GM12878 (cell line): ENCODE measurements at regions of chr6 and their contacts with region 1.

Region 1: DNA sequence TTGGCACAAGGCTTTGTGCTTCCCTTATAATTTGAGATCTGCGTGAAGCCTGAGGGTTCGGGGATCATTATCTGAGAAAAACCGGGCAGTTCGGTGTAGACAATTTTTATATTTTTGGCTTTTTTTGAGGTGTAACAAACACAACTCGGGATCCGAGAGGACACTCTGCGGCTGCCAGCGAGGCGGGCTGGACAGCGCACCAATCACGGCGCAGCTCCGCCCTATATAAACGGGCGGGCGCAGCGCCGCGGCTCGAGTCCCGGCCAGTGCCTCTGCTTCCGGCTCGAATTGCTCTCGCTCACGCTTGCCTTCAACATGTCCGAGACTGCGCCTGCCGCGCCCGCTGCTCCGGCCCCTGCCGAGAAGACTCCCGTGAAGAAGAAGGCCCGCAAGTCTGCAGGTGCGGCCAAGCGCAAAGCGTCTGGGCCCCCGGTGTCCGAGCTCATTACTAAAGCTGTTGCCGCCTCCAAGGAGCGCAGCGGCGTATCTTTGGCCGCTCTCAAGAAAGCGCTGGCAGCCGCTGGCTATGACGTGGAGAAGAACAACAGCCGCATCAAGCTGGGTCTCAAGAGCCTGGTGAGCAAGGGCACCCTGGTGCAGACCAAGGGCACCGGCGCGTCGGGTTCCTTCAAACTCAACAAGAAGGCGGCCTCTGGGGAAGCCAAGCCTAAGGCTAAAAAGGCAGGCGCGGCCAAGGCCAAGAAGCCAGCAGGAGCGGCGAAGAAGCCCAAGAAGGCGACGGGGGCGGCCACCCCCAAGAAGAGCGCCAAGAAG is 69.0 kb downstream of the HFE start:
- DNase-seq: peak; percentile 90
- ATAC-seq: peak; percentile 65
- H3K4me3 ChIP-seq: peak overlapping the region; percentile 88
- H3K27ac ChIP-seq: peak overlapping the region; percentile 94
- H3K4me1 ChIP-seq: peaks cover 11% of the 10 kb centered on the region
- H3K27me3 ChIP-seq: no peaks in the 10 kb centered on the region
- CTCF ChIP-seq: no peak
- EP300 ChIP-seq: no peak; a peak in 1 of 4 replicates
- POLR2A ChIP-seq: peak; percentile 93
- RAD21 ChIP-seq: no peak

Region 2: DNA sequence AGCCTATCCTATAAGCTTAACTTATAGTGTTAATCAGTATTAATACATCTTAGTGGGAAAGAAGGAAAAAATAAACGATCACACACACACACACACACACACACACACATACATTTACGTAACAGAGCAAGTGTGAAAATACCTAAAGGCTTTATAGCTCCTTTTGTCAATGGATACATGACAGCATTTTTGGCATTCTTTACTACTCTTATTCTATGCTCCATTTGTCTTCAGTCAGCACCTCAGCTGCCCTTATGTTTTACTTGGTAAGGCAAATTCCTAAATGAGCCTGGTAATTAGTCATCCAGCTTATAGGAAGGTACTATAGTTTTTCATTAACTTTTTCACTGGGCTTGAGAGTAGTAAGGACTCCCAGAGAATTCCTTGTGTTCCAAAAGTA is 257.1 kb before region 1 on chr6:
- CTCF ChIA-PET with region 1: no interaction called
- POLR2A ChIA-PET with region 1: no interaction called
- RAD21 ChIA-PET with region 1: no interaction called
- SMC1A ChIA-PET with region 1: no interaction called
- in situ Hi-C with region 1: no loop called
- intact Hi-C with region 1: no loop called
- DNase-seq: no peak
- ATAC-seq: no peak
- H3K4me3 ChIP-seq: no peak overlapping the region
- H3K27ac ChIP-seq: no peak overlapping the region
- H3K4me1 ChIP-seq: no peaks in the 10 kb centered on the region
- H3K27me3 ChIP-seq: no peaks in the 10 kb centered on the region
- CTCF ChIP-seq: no peak
- EP300 ChIP-seq: no peak
- POLR2A ChIP-seq: no peak
- RAD21 ChIP-seq: no peak

Region 3: DNA sequence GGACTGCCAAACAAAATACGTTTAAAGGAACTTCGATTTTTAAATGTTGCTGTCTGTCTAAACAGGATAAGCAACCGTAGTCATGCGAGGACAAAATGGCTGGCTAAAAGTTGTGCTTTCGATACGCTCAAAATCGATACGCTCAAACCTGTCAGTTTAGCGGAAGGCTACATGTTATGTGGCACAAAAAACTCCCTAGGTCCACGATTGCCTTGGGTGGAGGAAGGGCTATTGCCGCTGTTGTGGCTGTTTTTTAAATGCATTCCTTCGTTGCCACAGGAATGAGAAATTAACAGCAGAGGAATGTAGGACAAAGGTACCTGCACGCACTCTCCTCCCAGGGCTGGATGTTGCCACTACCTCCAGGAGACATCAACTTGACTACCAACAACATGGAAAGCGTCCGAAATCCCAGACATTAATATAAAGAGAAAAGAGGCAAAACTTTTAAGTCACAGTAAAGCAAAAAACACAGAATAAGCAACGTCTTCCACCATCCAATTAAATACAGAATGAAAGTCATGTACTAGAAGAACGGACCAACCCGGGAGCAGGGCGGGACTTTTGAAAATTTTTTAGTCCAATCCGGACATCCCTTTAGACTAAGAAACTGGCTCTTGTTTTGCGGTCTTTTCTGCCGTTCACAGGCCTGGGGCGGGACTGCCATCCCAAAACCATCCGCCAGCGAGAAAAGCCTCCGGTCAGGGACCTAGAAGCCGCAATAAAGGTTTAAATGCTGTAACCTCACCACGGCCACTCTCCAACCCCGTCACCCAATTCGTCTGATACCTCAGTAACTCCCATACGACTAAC is 101.2 kb before region 1 on chr6:
- CTCF ChIA-PET with region 1: no interaction called
- POLR2A ChIA-PET with region 1: no interaction called
- RAD21 ChIA-PET with region 1: no interaction called
- SMC1A ChIA-PET with region 1: interaction called, 4 read pairs
- in situ Hi-C with region 1: no loop called
- intact Hi-C with region 1: loop called (anchors 1 kb)
- DNase-seq: peak; percentile 88
- ATAC-seq: peak; percentile 71
- H3K4me3 ChIP-seq: peak overlapping the region; percentile 75
- H3K27ac ChIP-seq: peak overlapping the region; percentile 93
- H3K4me1 ChIP-seq: peaks cover 4% of the 10 kb centered on the region; the same call in 1 of the 2 replicates
- H3K27me3 ChIP-seq: no peaks in the 10 kb centered on the region
- CTCF ChIP-seq: peak in 1 of 3 experiments; percentile 26; a peak in 1 of 6 replicates
- EP300 ChIP-seq: no peak
- POLR2A ChIP-seq: peak; percentile 67
- RAD21 ChIP-seq: no peak

Region 4: GRCh38 chr6:26175428-26176181 is 19.3 kb after region 1 on chr6:
- CTCF ChIA-PET with region 1: interaction called, 11 read pairs
- POLR2A ChIA-PET with region 1: interaction called, 23 read pairs
- RAD21 ChIA-PET with region 1: interaction called, 17 read pairs
- SMC1A ChIA-PET with region 1: interaction called, 50 read pairs
- in situ Hi-C with region 1: no loop called
- intact Hi-C with region 1: no loop called
- DNase-seq: no peak
- ATAC-seq: peak; percentile 28
- H3K4me3 ChIP-seq: peak overlapping the region; percentile 9; the same call in 1 of the 2 replicates
- H3K27ac ChIP-seq: peak overlapping the region; percentile 27
- H3K4me1 ChIP-seq: peaks cover 27% of the 10 kb centered on the region
- H3K27me3 ChIP-seq: no peaks in the 10 kb centered on the region
- CTCF ChIP-seq: peak; percentile 56 to 77 (median 64); a peak in 5 of 6 replicates
- EP300 ChIP-seq: no peak
- POLR2A ChIP-seq: no peak
- RAD21 ChIP-seq: peak; percentile 91

Region 5: GRCh38 chr6:26183581-26184366 is 27.5 kb after region 1 on chr6:
- CTCF ChIA-PET with region 1: interaction called, 3 read pairs
- POLR2A ChIA-PET with region 1: interaction called, 28 read pairs
- RAD21 ChIA-PET with region 1: interaction called, 11 read pairs
- SMC1A ChIA-PET with region 1: interaction called, 11 read pairs
- in situ Hi-C with region 1: no loop called
- intact Hi-C with region 1: no loop called
- DNase-seq: peak; percentile 84
- ATAC-seq: peak; percentile 71
- H3K4me3 ChIP-seq: peak overlapping the region; percentile 59
- H3K27ac ChIP-seq: peak overlapping the region; percentile 78
- H3K4me1 ChIP-seq: peaks cover 23% of the 10 kb centered on the region
- H3K27me3 ChIP-seq: no peaks in the 10 kb centered on the region
- CTCF ChIP-seq: no peak
- EP300 ChIP-seq: no peak
- POLR2A ChIP-seq: peak; percentile 85
- RAD21 ChIP-seq: no peak

Region 6: GRCh38 chr6:26223650-26224546 is 67.6 kb after region 1 on chr6:
- CTCF ChIA-PET with region 1: no interaction called
- POLR2A ChIA-PET with region 1: interaction called, 10 read pairs
- RAD21 ChIA-PET with region 1: no interaction called
- SMC1A ChIA-PET with region 1: no interaction called
- in situ Hi-C with region 1: no loop called
- intact Hi-C with region 1: no loop called
- DNase-seq: peak; percentile 78
- ATAC-seq: peak; percentile 85
- H3K4me3 ChIP-seq: peak overlapping the region; percentile 79
- H3K27ac ChIP-seq: peak overlapping the region; percentile 96
- H3K4me1 ChIP-seq: peaks cover 21% of the 10 kb centered on the region
- H3K27me3 ChIP-seq: no peaks in the 10 kb centered on the region
- CTCF ChIP-seq: no peak
- EP300 ChIP-seq: no peak
- POLR2A ChIP-seq: no peak
- RAD21 ChIP-seq: no peak

Region 7: GRCh38 chr6:26304797-26305640 is 148.8 kb after region 1 on chr6:
- CTCF ChIA-PET with region 1: no interaction called
- POLR2A ChIA-PET with region 1: no interaction called
- RAD21 ChIA-PET with region 1: no interaction called
- SMC1A ChIA-PET with region 1: no interaction called
- in situ Hi-C with region 1: no loop called
- intact Hi-C with region 1: no loop called
- DNase-seq: no peak
- ATAC-seq: peak; percentile 79
- H3K4me3 ChIP-seq: peak overlapping the region; percentile 60
- H3K27ac ChIP-seq: peak overlapping the region; percentile 41
- H3K4me1 ChIP-seq: peaks cover 11% of the 10 kb centered on the region
- H3K27me3 ChIP-seq: no peaks in the 10 kb centered on the region
- CTCF ChIP-seq: no peak
- EP300 ChIP-seq: peak in 1 of 2 experiments; percentile 54; a peak in 2 of 4 replicates
- POLR2A ChIP-seq: no peak
- RAD21 ChIP-seq: no peak